Heart right ventricle (tissue), 16 donors: ENCODE measurements at regions of chr22 and their contacts with region 1.

Region 1: GRCh38 chr22:50341977-50342650 is 1.0 kb upstream of the PPP6R2 start:
- DNase-seq: peak; percentile 88 to 89
- ATAC-seq: peak; percentile 71 to 90 (median 84)
- H3K4me3 ChIP-seq: peak overlapping the region in 9 of 10 donors; percentile 69 to 98 (median 78)
- H3K27ac ChIP-seq: peak overlapping the region in 9 of 10 donors; percentile 56 to 91 (median 79)
- H3K4me1 ChIP-seq: peaks cover 0 to 19% (median 12%) of the 10 kb centered on the region in 9 donors
- H3K27me3 ChIP-seq: no peaks in the 10 kb centered on the region
- CTCF ChIP-seq: peak; percentile 93 to 99 (median 97)

Region 2: GRCh38 chr22:50244420-50245213 is 97.5 kb before region 1 on chr22 and contains the start of gene TUBGCP6:
- intact Hi-C with region 1: loop called in 3 of 10 experiments (anchors 2 kb)
- DNase-seq: peak; percentile 95
- ATAC-seq: peak; percentile 90 to 96 (median 94)
- H3K4me3 ChIP-seq: peak within 1 kb of the TSS; percentile 68 to 100 (median 77)
- H3K27ac ChIP-seq: peak within 1 kb of the TSS; percentile 28 to 96 (median 86)
- H3K4me1 ChIP-seq: peaks cover 34 to 65% (median 51%) of the 10 kb centered on the region in 9 donors
- H3K27me3 ChIP-seq: no peaks in the 10 kb centered on the region
- CTCF ChIP-seq: peak in 3 of 9 donors; percentile 40 to 41 (median 40)
- total RNA-seq, gene TUBGCP6: 15.5 to 23.3 (median 18.5) TPM

Region 3: GRCh38 chr22:50250555-50251476 is 91.3 kb before region 1 on chr22 and contains the start of gene HDAC10:
- intact Hi-C with region 1: loop called in 7 of 10 experiments (anchors 2 to 5 kb)
- DNase-seq: peak; percentile 69 to 85
- ATAC-seq: peak; percentile 64 to 86 (median 74)
- H3K4me3 ChIP-seq: peak within 1 kb of the TSS; percentile 52 to 94 (median 77)
- H3K27ac ChIP-seq: peak within 1 kb of the TSS; percentile 19 to 85 (median 72)
- H3K4me1 ChIP-seq: peaks cover 13 to 48% (median 33%) of the 10 kb centered on the region in 9 donors
- H3K27me3 ChIP-seq: no peaks in the 10 kb centered on the region
- CTCF ChIP-seq: no peak
- total RNA-seq, gene HDAC10: 7.1 to 16.7 (median 10.3) TPM

Region 4: GRCh38 chr22:50258361-50259292 is 83.5 kb before region 1 on chr22:
- intact Hi-C with region 1: loop called in 7 of 10 experiments (anchors 2 to 5 kb)
- DNase-seq: peak; percentile 53 to 68
- ATAC-seq: peak; percentile 32 to 84 (median 74)
- H3K4me3 ChIP-seq: no peak overlapping the region
- H3K27ac ChIP-seq: peak overlapping the region in 5 of 10 donors; percentile 17 to 65 (median 52)
- H3K4me1 ChIP-seq: peaks cover 6 to 48% (median 21%) of the 10 kb centered on the region in 9 donors
- H3K27me3 ChIP-seq: peaks cover 0 to 31% (median 0%) of the 10 kb centered on the region in 7 donors
- CTCF ChIP-seq: no peak

Region 5: GRCh38 chr22:50306753-50307749 is 35.1 kb before region 1 on chr22 and contains the start of gene PLXNB2:
- intact Hi-C with region 1: no loop called
- DNase-seq: peak; percentile 87 to 88
- ATAC-seq: peak; percentile 36 to 76 (median 62)
- H3K4me3 ChIP-seq: peak within 1 kb of the TSS; percentile 85 to 98 (median 94)
- H3K27ac ChIP-seq: peak within 1 kb of the TSS; percentile 91 to 98 (median 94)
- H3K4me1 ChIP-seq: peaks cover 43 to 66% (median 64%) of the 10 kb centered on the region in 9 donors
- H3K27me3 ChIP-seq: peaks cover 0 to 4% (median 0%) of the 10 kb centered on the region in 7 donors
- CTCF ChIP-seq: no peak
- total RNA-seq, gene PLXNB2: 43.0 to 101 (median 57.8) TPM